Gastrocnemius medialis (tissue), 4 donors: ENCODE measurements at regions of chr18 and their contacts with region 1.

Region 1: GRCh38 chr18:32389858-32390257 is 80.8 kb downstream of the GAREM1 start:
- DNase-seq: no peak
- ATAC-seq: no peak
- H3K4me3 ChIP-seq: no peak overlapping the region
- H3K27ac ChIP-seq: no peak overlapping the region
- H3K4me1 ChIP-seq: peaks cover 18 to 19% of the 10 kb centered on the region in 2 donors
- H3K27me3 ChIP-seq: no peaks in the 10 kb centered on the region
- CTCF ChIP-seq: no peak
- POLR2A ChIP-seq: no peak

Region 2: DNA sequence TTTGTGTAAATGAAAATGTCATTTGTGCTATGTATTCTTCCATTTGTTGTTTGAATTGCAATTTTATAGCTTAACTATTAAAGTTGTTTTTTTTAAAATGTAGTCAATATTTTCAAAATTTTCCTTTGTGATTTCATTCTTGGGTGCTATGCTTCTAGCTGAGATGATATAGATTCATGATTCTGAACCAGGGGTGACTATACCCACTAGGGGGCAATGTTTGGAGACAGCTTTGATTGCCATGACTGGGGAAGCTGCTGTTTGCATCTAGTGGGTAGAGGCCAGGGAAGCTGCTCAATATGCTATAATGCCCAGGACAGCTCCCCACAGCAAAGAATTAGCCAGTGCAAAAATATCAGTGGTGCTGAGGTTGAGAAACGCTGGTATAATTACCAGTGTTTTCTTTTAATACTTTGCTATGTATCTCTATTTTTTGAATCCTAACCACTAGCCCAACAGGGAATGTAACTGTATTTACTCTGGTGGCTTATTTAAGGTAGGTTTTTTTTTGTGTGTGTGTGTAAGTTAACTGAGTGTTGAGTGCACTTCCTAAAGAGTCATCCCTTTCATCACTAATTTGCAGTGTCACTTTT is 100.3 kb before region 1 on chr18:
- in situ Hi-C with region 1: no loop called
- intact Hi-C with region 1: loop called (anchors 5 kb)
- DNase-seq: peak in 1 of 2 donors; percentile 42
- ATAC-seq: peak; percentile 58 to 73
- H3K4me3 ChIP-seq: no peak overlapping the region
- H3K27ac ChIP-seq: no peak overlapping the region
- H3K4me1 ChIP-seq: peaks cover 0 to 5% of the 10 kb centered on the region in 2 donors
- H3K27me3 ChIP-seq: no peaks in the 10 kb centered on the region
- CTCF ChIP-seq: peak; percentile 47 to 69 (median 53)
- POLR2A ChIP-seq: no peak

Region 3: DNA sequence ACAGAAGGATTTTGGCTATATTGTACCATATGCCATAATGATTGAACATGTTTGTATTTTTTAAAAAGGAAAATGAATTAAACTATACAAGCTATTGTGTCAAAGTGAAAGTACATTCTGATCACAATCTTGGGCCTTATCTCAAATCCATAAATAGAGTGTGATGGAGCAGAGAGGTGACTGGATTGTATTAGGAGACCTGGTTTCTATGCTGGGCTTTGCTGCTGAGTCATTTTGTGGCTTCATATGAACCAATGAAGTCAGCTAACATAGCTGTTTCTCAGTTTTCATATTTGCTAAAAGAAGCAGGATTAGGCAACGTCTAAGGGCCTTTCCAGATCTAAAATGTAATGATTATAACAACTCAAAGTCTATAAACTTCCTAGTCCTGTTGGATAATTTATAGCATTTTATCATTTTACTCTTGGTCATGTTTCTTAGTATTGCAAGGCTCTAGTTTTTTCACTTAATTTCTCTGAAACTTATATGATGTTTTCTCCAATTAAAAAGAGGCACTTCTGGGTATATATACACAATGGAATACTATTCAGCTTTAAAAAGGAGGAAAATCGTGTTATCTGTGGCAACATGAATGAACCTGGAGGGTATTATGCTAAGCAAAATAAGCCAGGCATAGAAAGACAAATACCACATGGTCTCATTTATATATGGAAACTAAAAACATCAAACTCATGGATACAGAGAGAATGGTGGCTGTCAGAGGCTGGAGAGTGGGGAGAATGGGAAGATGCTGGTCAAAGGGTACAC is 87.7 kb before region 1 on chr18:
- in situ Hi-C with region 1: no loop called
- intact Hi-C with region 1: no loop called
- DNase-seq: peak; percentile 22 to 58
- ATAC-seq: peak; percentile 94 to 98
- H3K4me3 ChIP-seq: peak overlapping the region in 2 of 4 donors; percentile 24 to 25
- H3K27ac ChIP-seq: peak overlapping the region; percentile 66 to 85 (median 78)
- H3K4me1 ChIP-seq: peaks cover 16 to 23% of the 10 kb centered on the region in 2 donors
- H3K27me3 ChIP-seq: no peaks in the 10 kb centered on the region
- CTCF ChIP-seq: no peak
- POLR2A ChIP-seq: no peak

Region 4: GRCh38 chr18:32349728-32350395 is 40.0 kb before region 1 on chr18:
- in situ Hi-C with region 1: no loop called
- intact Hi-C with region 1: loop called (anchors 5 kb)
- DNase-seq: peak; percentile 51 to 55
- ATAC-seq: peak; percentile 59 to 74
- H3K4me3 ChIP-seq: peak overlapping the region in 3 of 4 donors; percentile 7 to 24 (median 18)
- H3K27ac ChIP-seq: peak overlapping the region; percentile 34 to 70 (median 60)
- H3K4me1 ChIP-seq: peaks cover 24 to 33% of the 10 kb centered on the region in 2 donors
- H3K27me3 ChIP-seq: no peaks in the 10 kb centered on the region
- CTCF ChIP-seq: no peak
- POLR2A ChIP-seq: no peak

Region 5: DNA sequence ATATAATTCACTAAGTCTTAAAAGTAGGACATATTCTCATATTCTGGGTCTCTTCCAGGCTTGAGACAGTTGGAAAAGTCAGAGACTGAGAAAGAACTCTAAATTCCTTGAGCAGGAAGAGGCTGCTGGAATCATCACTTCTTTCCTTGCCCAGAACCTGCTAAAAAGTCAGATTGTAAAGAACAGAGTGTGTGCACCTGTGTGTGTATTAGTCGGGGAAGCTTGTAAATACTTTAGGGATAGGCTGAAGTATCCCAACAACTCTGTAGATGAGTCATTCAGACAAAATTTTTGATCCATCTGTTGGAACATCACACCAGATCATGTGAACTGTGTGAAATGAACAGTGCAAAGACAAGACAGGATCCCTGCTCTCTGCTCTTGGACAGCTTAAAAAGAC is 64.7 kb after region 1 on chr18:
- in situ Hi-C with region 1: no loop called
- intact Hi-C with region 1: loop called (anchors 2 kb)
- DNase-seq: no peak
- ATAC-seq: peak; percentile 92 to 97
- H3K4me3 ChIP-seq: no peak overlapping the region
- H3K27ac ChIP-seq: peak overlapping the region; percentile 21 to 55 (median 38)
- H3K4me1 ChIP-seq: peaks cover 51 to 60% of the 10 kb centered on the region in 2 donors
- H3K27me3 ChIP-seq: no peaks in the 10 kb centered on the region
- CTCF ChIP-seq: no peak
- POLR2A ChIP-seq: no peak

Region 6: GRCh38 chr18:32470713-32471633 is 81.1 kb after region 1 on chr18 and contains the start of gene GAREM1:
- in situ Hi-C with region 1: no loop called
- intact Hi-C with region 1: no loop called
- DNase-seq: peak; percentile 95 to 96
- ATAC-seq: peak; percentile 89 to 90
- H3K4me3 ChIP-seq: peak within 1 kb of the TSS; percentile 76 to 85 (median 81)
- H3K27ac ChIP-seq: peak within 1 kb of the TSS; percentile 82 to 92 (median 88)
- H3K4me1 ChIP-seq: peaks cover 22 to 36% of the 10 kb centered on the region in 2 donors
- H3K27me3 ChIP-seq: no peaks in the 10 kb centered on the region
- CTCF ChIP-seq: peak; percentile 71 to 91 (median 83)
- POLR2A ChIP-seq: peak; percentile 95 to 97
- total RNA-seq, gene GAREM1: 13.4 to 21.9 (median 16.4) TPM